Activated naive CD4-positive, alpha-beta T cell treated with anti-CD3 and anti-CD28 coated beads for 36 hours (primary cell): ENCODE measurements at regions of chr22 and their contacts with region 1.

Region 1: GRCh38 chr22:50169774-50170341 is 673 bp upstream of the PANX2 start:
- DNase-seq: peak; percentile 84
- H3K4me3 Mint-ChIP-seq: peak overlapping the region; percentile 57
- H3K27ac Mint-ChIP-seq: no peak overlapping the region
- H3K4me1 Mint-ChIP-seq: peaks cover 2% of the 10 kb centered on the region
- H3K27me3 Mint-ChIP-seq: peaks cover 32% of the 10 kb centered on the region

Region 2: DNA sequence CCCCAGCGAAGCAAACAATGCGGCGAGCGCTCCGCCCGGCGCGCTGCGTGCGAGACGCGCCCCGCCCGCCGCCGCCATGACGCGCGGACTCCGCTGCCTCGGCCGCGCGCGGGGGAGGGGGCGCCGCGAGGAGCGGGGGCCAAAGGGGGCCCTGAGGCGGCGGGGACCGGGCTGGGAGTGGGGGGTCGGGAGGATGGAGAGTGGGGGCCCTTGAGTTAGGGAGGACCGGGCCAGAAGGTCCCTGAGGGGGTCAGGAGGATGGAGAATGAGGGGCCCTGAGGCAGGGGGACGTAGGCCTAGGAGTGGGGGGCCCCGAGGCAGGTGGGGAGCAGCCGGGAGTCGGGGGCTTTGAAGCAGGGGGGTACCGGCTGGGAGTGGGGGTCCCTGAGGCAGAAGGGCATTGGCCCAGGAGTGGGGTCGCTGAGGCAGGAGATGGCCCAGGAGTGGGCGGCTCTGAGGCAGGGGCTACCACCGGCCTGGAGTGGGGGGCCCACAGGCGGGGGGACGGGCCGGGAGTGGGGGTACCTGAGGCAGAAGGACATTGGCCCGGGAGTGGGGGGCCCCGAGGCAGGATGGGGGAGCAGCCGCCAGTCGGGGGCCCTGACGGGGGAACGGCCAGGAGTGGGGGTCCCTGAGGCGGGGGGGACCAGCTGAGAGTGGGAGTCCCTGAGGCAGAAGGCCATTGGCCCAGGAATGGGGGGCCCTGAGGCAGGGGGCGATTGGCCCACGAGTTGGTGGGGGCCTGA is 341.8 kb before region 1 on chr22 and contains the start of gene BRD1:
- CTCF ChIA-PET with region 1: no interaction called
- intact Hi-C with region 1: no loop called
- DNase-seq: peak; percentile 35
- H3K4me3 Mint-ChIP-seq: peak within 1 kb of the TSS; percentile 85
- H3K27ac Mint-ChIP-seq: peak within 1 kb of the TSS; percentile 91
- H3K4me1 Mint-ChIP-seq: peaks cover 53% of the 10 kb centered on the region
- H3K27me3 Mint-ChIP-seq: no peaks in the 10 kb centered on the region
- total RNA-seq, gene BRD1: 26.0 to 27.0 TPM

Region 3: DNA sequence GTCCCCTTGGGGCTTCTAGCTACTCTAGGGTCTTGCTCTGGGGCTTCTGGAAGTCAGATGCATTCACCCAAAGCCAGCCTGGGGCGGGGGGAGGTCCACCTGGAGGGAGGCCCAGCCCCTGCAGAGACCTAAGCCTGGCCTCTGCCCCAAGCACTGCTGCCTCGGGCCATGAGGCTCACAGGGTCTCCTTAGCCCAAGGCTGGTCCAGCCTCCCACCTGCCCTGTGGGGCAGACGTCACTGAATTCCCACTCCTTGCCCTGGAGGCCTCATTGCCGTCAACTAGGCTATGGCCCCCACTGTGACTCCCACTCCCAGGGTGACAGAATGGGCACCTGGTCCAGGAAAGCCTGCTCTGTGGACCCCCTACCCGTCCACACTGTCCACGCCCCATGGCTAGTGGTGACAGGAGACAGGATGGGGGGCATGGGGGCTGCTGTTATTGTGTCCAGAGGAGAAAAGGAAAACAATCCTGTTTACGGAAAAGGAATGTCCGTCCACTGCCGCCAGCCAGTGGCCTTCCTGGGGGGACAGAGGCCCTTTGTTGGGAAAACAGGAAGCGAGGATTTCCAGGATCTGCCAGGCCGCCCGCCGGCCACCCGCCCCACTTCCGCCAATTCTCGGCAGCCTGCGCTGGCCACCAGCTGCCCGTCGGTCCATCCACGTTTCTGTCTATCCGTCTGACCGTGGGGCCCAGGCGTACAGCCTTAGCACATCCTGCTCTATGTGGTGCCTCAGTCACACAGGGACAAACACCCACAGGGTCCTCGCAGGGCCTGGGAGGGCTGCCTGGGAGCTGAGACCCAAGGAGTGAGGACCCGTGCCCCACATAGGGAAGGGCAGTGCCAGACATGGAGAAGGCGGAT is 232.0 kb before region 1 on chr22:
- CTCF ChIA-PET with region 1: no interaction called
- intact Hi-C with region 1: no loop called
- DNase-seq: no peak
- H3K4me3 Mint-ChIP-seq: no peak overlapping the region
- H3K27ac Mint-ChIP-seq: peak overlapping the region; percentile 53
- H3K4me1 Mint-ChIP-seq: peaks cover 23% of the 10 kb centered on the region
- H3K27me3 Mint-ChIP-seq: no peaks in the 10 kb centered on the region

Region 4: DNA sequence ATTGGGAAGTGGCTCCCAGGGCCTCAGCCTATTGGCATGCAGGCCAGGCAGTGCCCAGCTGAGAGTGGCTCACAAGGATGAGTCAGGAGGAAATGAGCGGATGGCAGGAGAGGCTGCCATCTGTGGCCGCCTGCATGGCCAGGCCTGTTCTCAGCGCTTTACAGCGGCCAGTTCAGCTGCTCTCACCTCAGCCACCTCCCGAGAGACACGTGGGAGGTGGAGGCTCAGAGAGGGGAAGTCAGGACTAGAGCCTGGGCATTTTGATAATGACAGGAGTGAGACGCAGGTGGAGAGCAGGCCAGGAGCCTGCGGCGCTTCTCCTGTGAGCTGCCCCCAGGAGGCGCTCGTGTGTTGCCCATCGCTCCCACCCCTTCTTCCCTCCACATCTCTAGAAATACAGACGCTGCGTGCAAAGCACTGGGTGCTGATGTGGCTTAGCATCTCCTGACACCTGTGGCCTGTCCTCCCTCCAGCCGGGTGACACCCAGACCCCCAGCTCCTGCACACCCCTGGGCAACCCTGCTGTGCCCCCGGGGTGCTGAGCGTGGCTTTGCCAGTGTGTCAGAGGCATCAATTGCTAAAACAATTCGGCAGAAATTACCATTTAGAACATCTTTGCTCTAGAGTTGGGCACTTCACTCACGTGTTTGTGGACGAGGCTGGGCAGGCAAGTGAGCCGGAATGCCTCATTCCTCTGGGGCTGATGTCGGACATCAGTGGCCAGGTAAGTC is 20.7 kb before region 1 on chr22:
- CTCF ChIA-PET with region 1: interaction called, 10 read pairs
- intact Hi-C with region 1: no loop called
- DNase-seq: peak; percentile 76
- H3K4me3 Mint-ChIP-seq: no peak overlapping the region
- H3K27ac Mint-ChIP-seq: no peak overlapping the region
- H3K4me1 Mint-ChIP-seq: no peaks in the 10 kb centered on the region
- H3K27me3 Mint-ChIP-seq: no peaks in the 10 kb centered on the region

Region 5: DNA sequence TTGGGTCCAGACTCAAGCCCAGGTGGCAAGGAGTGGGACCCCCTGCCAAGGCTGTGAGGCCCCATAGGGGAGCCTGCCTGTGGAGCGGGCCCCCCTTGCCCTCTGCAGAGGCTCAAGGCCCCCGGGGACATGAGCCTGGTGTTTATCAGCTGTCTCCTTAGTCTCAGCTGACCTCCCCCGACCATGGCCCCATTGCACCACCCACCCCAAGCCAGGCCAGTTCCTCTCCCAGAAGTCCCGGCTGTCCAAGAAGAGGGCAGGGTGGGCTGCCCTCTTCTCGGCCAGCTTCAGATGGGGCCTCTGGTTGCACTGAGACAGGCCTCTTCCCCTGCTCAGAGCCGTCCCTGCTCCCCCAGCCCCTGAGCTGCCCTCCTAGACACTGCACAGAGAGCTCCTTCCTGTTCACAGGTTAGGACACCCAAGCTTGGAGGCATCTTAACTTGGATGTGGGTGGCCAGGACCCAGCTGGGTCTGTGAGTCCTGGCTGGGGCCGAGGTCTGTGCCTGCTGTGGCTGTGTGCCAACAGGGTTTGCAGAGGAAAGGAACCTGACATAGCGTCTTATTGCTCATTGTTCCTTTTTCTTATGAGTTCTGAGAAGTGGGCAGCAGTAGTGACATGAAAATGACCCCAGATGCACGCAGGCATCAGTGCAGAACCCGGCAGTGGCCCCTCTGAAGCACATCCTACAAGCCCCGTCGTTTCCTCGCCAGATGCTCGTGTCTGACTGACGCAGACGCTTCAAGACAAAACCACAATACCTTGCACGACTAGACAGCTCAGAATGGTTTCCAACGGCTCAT is 21.3 kb after region 1 on chr22:
- CTCF ChIA-PET with region 1: no interaction called
- intact Hi-C with region 1: loop called (anchors 1 kb)
- DNase-seq: peak; percentile 84
- H3K4me3 Mint-ChIP-seq: peak overlapping the region; percentile 84
- H3K27ac Mint-ChIP-seq: peak overlapping the region; percentile 88
- H3K4me1 Mint-ChIP-seq: peaks cover 53% of the 10 kb centered on the region
- H3K27me3 Mint-ChIP-seq: no peaks in the 10 kb centered on the region

Region 6: DNA sequence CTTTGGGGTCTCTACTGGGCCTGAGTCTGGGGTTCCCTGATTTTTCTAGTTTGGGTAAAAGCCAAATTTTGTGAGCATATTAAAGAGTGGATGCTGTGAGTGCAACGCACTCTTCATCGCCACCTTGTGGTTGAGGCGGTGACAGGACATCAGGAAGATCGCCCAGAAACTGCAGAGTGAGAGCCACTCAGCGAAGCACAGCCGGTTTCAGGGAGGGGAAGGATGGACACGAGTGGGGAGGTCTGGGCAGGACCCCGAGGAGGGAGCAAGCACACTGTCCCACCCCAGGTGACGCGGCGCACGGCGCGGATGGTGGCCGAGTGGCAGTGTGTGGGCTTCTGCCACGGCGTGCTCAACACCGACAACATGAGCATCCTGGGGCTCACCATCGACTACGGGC is 40.0 kb after region 1 on chr22:
- CTCF ChIA-PET with region 1: no interaction called
- intact Hi-C with region 1: loop called (anchors 1 kb)
- DNase-seq: peak; percentile 83
- H3K4me3 Mint-ChIP-seq: no peak overlapping the region
- H3K27ac Mint-ChIP-seq: peak overlapping the region; percentile 78
- H3K4me1 Mint-ChIP-seq: peaks cover 13% of the 10 kb centered on the region
- H3K27me3 Mint-ChIP-seq: no peaks in the 10 kb centered on the region